ENCODE measurements at regions of chr17 and their contacts with region 1.

Region 1: GRCh38 chr17:72699545-72699944 is 392.9 kb downstream of the SLC39A11 start:
- DNase-seq: no peak
- H3K4me3 Mint-ChIP-seq: no peak overlapping the region
- H3K27ac Mint-ChIP-seq: no peak overlapping the region
- H3K4me1 Mint-ChIP-seq: peaks cover 8% of the 10 kb centered on the region
- H3K27me3 Mint-ChIP-seq: no peaks in the 10 kb centered on the region

Region 2: DNA sequence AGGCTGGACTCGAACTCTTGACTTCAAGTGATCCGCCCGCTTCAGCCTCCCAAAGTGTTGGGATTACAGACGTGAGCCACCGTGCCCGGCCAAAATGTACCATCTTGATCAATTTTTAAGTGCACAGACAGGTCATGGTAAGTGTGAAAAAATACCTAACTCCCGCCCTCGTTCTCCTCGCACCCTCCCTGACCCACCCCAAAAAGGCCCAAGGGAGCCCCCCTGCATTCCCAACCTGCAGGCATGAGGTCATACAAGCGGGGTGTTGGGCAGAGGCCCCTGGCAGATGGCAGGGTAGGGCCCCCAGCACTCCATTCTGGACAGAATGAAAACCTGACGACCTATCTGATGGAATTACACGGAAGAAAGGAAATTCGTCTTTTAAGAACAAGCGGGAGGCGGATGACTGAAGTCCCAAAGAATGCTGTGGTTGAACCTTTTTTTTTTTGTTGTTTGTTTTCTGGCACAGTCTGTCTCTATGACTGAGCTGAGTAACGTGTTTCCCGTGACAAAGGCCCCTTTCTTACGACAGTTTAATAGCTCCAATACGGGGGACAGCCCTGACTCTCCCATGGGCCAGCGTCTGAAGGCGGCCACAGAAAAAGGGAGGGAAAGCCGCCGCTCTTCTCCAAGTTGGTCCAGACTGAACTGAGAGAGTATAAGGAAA is 16.5 kb after region 1 on chr17:
- CTCF ChIA-PET with region 1: no interaction called
- POLR2A ChIA-PET with region 1: no interaction called
- intact Hi-C with region 1: loop called (anchors 2 kb)
- DNase-seq: no peak
- H3K4me3 Mint-ChIP-seq: no peak overlapping the region
- H3K27ac Mint-ChIP-seq: no peak overlapping the region
- H3K4me1 Mint-ChIP-seq: peaks cover 23% of the 10 kb centered on the region
- H3K27me3 Mint-ChIP-seq: no peaks in the 10 kb centered on the region

Region 3: DNA sequence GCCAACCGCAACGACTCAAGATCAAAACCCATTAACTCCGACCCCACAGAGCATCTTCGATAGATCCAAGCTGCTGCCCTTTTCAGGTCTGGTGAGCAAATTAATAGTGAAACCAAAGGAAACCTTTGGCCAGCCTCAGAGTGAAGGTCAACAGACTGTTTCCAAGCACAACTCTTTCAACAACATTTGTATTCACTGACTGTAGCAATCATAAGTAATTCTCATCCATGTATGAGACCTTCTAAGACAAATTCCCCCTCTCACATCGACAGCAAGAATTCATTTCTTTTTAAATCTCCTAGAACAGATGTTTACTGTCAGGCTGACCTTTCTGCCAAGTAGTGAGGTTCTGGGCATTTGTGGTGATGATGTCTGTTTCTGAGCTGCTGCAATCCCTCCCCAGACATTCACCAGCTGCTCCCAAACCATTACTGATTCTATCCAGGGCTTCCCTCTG is 328.8 kb after region 1 on chr17:
- CTCF ChIA-PET with region 1: no interaction called
- POLR2A ChIA-PET with region 1: no interaction called
- intact Hi-C with region 1: no loop called
- DNase-seq: no peak
- H3K4me3 Mint-ChIP-seq: no peak overlapping the region
- H3K27ac Mint-ChIP-seq: no peak overlapping the region
- H3K4me1 Mint-ChIP-seq: no peaks in the 10 kb centered on the region
- H3K27me3 Mint-ChIP-seq: no peaks in the 10 kb centered on the region

Measured in activated CD4-positive, alpha-beta memory T cell treated with anti-CD3 and anti-CD28 coated beads for 36 hours (primary cell).